PC-9 (cell line): ENCODE measurements at regions of chr5 and their contacts with region 1.

Region 1: GRCh38 chr5:112419986-112420864 is 1.1 kb upstream of the EPB41L4A start:
- DNase-seq: peak; percentile 60 to 82
- H3K4me3 ChIP-seq: peak overlapping the region; percentile 66
- H3K27ac ChIP-seq: no peak overlapping the region
- H3K4me1 ChIP-seq: no peaks in the 10 kb centered on the region
- H3K27me3 ChIP-seq: peaks cover 37% of the 10 kb centered on the region
- CTCF ChIP-seq: peak; percentile 78

Region 2: DNA sequence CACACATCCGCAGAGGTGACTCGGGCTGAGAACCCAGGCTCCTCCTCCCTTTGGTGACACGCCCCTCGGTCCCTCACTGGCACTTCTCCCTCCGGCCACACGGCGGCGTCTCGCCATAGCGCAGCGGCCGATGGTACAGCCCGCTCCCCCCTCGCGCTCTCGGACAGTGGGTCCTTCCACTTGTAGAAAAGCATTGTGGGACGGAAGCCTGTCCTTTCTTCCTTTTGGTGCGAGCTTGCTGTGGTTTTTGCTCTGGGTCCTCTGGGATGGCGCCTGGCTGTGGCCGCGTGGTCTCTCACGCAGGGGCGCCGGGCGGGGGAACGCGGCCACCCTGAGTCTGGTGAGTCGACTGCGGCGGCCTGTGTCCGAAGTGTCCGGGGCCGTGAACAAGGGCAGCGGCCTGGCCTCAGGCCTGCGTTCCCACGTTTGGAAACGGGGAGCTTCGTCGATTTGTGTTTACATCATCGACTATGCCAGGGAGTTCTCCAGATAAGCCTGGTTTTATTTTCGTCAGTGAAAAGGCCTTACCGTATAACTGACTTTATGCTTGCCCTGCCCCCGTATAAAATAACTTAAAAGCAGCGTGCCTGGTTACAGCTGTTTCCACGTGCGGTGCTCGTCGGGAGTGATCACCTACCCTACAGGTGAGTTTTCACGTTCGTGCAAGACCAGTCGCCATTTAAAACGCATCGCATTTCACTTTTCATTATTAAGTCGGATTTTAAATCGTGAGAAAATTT is 259.4 kb before region 1 on chr5:
- CTCF ChIA-PET with region 1: interaction called, 11 read pairs
- POLR2A ChIA-PET with region 1: no interaction called
- intact Hi-C with region 1: loop called (anchors 1 kb)
- DNase-seq: peak; percentile 71 to 89
- H3K4me3 ChIP-seq: peak overlapping the region; percentile 85
- H3K27ac ChIP-seq: peak overlapping the region; percentile 73
- H3K4me1 ChIP-seq: peaks cover 16% of the 10 kb centered on the region
- H3K27me3 ChIP-seq: no peaks in the 10 kb centered on the region
- CTCF ChIP-seq: peak; percentile 94

Region 3: GRCh38 chr5:112174959-112175594 is 245.1 kb before region 1 on chr5:
- CTCF ChIA-PET with region 1: interaction called, 11 read pairs
- POLR2A ChIA-PET with region 1: no interaction called
- intact Hi-C with region 1: loop called (anchors 1 kb)
- DNase-seq: peak; percentile 20 to 51
- H3K4me3 ChIP-seq: no peak overlapping the region
- H3K27ac ChIP-seq: no peak overlapping the region
- H3K4me1 ChIP-seq: peaks cover 4% of the 10 kb centered on the region; the same call in 1 of the 2 replicates
- H3K27me3 ChIP-seq: no peaks in the 10 kb centered on the region
- CTCF ChIP-seq: peak; percentile 83

Region 4: DNA sequence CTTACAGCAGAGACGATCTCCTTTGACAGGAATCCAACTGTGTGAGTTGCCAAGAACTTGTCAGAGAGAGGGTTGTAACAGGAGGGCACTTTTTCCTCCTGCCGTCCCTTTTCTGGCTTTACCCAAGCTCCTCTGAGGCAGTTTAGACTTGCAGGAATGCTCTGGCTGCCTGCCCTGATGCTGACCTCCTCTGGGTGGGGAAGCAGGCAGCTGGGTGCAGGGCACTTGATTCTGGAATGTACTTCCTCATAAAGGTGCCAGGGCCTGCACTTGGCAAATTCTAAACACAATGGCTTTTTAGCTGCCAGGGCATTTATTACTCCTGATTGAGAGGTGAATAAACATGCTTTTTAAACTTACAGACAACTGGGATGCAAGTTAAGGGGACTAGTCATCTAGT is 191.6 kb before region 1 on chr5:
- CTCF ChIA-PET with region 1: interaction called, 4 read pairs
- POLR2A ChIA-PET with region 1: no interaction called
- intact Hi-C with region 1: loop called (anchors 5 kb)
- DNase-seq: peak; percentile 91 to 95
- H3K4me3 ChIP-seq: no peak overlapping the region; the same call in 1 of the 2 replicates
- H3K27ac ChIP-seq: peak overlapping the region; percentile 60
- H3K4me1 ChIP-seq: peaks cover 41% of the 10 kb centered on the region
- H3K27me3 ChIP-seq: no peaks in the 10 kb centered on the region
- CTCF ChIP-seq: no peak

Region 5: GRCh38 chr5:112492291-112492690 is 72.1 kb after region 1 on chr5:
- CTCF ChIA-PET with region 1: interaction called, 4 read pairs
- POLR2A ChIA-PET with region 1: no interaction called
- intact Hi-C with region 1: loop called (anchors 5 kb)
- DNase-seq: peak in 1 of 2 experiments; percentile 14
- H3K4me3 ChIP-seq: no peak overlapping the region
- H3K27ac ChIP-seq: no peak overlapping the region
- H3K4me1 ChIP-seq: no peaks in the 10 kb centered on the region
- H3K27me3 ChIP-seq: no peaks in the 10 kb centered on the region
- CTCF ChIP-seq: peak; percentile 41; the same call in 1 of the 2 replicates

Region 6: DNA sequence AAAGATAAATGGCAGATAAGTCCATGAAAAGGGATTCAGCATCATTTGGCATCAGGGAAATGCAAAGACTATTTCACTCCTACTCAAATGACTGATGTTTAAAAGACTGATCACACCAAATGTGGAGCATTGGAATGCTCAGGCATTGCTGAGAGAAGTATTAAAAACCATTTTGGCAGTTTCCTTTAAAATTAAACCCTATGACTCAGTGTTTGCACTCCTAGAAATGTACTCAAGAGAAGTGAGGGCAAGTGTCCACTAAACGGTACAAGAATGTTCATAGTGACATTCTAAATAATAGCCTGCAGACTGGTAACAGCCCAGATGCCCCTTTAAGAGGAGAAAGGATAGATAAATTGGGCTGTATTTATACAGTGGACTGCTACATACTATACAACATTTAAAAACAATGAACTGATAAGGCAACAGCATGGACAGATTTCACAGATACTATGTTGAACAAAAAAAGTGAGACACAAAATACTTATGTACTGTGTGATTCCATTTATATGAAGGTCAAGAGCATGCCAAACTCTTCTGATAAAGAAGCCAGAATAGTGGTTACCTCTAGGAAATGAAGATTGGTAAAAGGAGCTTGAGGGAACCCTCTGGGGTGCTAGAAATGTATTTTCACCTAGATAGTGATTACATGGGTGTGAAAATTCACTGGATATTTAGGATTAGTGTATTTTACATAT is 342.0 kb after region 1 on chr5:
- CTCF ChIA-PET with region 1: no interaction called
- POLR2A ChIA-PET with region 1: no interaction called
- intact Hi-C with region 1: no loop called
- DNase-seq: no peak
- H3K4me3 ChIP-seq: no peak overlapping the region
- H3K27ac ChIP-seq: no peak overlapping the region
- H3K4me1 ChIP-seq: no peaks in the 10 kb centered on the region
- H3K27me3 ChIP-seq: no peaks in the 10 kb centered on the region
- CTCF ChIP-seq: no peak